Mammary epithelial cell (primary cell): ENCODE measurements at regions of chr1 and their contacts with region 1.

Region 1: GRCh38 chr1:45815667-45816458 is 12.5 kb downstream of the MAST2 start:
- DNase-seq: peak; percentile 66
- H3K4me3 ChIP-seq: no peak overlapping the region
- H3K27ac ChIP-seq: no peak overlapping the region
- H3K4me1 ChIP-seq: peaks cover 7% of the 10 kb centered on the region
- H3K27me3 ChIP-seq: no peaks in the 10 kb centered on the region
- CTCF ChIP-seq: no peak

Region 2: GRCh38 chr1:45713711-45714110 is 102.2 kb before region 1 on chr1:
- CTCF ChIA-PET with region 1: no interaction called
- dilution Hi-C with region 1: loop called (anchors 5 kb)
- in situ Hi-C with region 1: no loop called
- intact Hi-C with region 1: no loop called
- DNase-seq: no peak
- H3K4me3 ChIP-seq: no peak overlapping the region
- H3K27ac ChIP-seq: no peak overlapping the region
- H3K4me1 ChIP-seq: no peaks in the 10 kb centered on the region
- H3K27me3 ChIP-seq: no peaks in the 10 kb centered on the region
- CTCF ChIP-seq: no peak

Region 3: GRCh38 chr1:45854724-45855123 is 38.9 kb after region 1 on chr1:
- CTCF ChIA-PET with region 1: no interaction called
- dilution Hi-C with region 1: loop called (anchors 5 kb)
- in situ Hi-C with region 1: no loop called
- intact Hi-C with region 1: no loop called
- DNase-seq: no peak
- H3K4me3 ChIP-seq: no peak overlapping the region
- H3K27ac ChIP-seq: no peak overlapping the region
- H3K4me1 ChIP-seq: no peaks in the 10 kb centered on the region
- H3K27me3 ChIP-seq: no peaks in the 10 kb centered on the region
- CTCF ChIP-seq: no peak